BJ (cell line): ENCODE measurements at regions of chr12 and their contacts with region 1.

Region 1: DNA sequence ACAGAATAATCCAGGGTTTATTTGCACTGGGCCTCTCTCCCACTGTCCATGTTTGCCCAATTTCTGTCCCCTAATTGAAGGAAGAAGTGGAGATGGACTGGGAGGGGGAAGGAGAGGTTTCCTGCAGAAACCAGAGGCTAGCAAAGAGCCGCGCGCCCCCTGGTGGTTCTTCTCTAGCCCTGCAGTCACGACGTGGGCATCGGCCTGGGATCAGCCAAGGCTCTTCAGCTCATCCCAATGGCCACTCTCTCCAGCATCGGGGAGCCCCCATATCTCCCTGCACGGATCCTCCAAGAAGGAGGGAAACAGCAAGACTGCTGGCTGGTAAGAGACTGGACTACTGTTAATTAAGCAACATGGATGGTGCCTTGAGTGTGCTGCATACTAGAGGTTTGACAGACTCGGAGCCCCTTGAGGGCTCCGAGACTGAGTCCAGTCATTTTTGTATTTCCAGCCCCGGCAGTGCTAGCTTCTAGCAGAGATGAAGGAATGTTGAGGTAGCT is 18.7 kb downstream of the ZBTB39 start:
- DNase-seq: no peak
- H3K4me3 ChIP-seq: no peak overlapping the region
- H3K27me3 ChIP-seq: no peaks in the 10 kb centered on the region
- CTCF ChIP-seq: peak; percentile 97

Region 2: DNA sequence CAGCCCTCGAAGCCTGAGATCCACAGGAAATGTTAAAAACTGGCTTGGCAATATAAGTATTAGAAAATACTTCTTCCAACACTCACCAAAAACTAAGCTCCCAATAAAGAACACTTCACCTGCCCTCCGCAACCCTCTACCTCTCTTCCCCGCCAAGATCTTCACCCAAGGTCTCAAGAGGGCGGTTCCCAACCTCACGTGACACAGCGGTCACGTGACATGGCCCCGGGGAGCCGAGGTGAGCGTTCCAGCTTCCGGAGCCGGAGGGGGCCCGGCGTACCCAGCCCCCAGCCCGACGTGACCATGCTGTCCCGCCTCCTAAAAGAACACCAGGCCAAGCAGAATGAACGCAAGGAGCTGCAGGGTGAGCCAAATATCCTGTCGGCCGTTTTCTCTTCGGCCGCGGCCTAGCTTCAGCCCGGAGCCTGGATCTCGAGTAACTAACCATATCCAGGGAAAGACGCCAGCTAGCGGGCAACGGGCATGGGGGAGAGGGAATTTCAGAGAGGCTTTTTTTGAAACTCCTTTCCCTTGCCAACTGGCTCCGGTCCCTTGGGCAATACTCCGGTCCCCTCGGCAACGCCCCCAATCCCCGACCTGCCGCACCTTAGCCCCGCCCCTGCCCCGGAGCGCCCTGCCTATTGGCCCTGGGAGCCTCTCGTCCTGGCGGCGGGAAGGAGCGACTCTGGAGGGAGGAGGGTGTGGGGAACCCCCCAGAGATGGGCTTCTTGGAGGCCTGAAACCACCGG is 1271.6 kb before region 1 on chr12 and contains the start of gene BLOC1S1:
- CTCF ChIA-PET with region 1: no interaction called
- POLR2A ChIA-PET with region 1: no interaction called
- DNase-seq: no peak
- H3K4me3 ChIP-seq: peak within 1 kb of the TSS; percentile 74
- H3K27me3 ChIP-seq: no peaks in the 10 kb centered on the region
- CTCF ChIP-seq: peak; percentile 2; the same call in 1 of the 2 replicates
- polyA plus RNA-seq, gene BLOC1S1: 147 and 172 TPM in 2 replicates

Region 3: DNA sequence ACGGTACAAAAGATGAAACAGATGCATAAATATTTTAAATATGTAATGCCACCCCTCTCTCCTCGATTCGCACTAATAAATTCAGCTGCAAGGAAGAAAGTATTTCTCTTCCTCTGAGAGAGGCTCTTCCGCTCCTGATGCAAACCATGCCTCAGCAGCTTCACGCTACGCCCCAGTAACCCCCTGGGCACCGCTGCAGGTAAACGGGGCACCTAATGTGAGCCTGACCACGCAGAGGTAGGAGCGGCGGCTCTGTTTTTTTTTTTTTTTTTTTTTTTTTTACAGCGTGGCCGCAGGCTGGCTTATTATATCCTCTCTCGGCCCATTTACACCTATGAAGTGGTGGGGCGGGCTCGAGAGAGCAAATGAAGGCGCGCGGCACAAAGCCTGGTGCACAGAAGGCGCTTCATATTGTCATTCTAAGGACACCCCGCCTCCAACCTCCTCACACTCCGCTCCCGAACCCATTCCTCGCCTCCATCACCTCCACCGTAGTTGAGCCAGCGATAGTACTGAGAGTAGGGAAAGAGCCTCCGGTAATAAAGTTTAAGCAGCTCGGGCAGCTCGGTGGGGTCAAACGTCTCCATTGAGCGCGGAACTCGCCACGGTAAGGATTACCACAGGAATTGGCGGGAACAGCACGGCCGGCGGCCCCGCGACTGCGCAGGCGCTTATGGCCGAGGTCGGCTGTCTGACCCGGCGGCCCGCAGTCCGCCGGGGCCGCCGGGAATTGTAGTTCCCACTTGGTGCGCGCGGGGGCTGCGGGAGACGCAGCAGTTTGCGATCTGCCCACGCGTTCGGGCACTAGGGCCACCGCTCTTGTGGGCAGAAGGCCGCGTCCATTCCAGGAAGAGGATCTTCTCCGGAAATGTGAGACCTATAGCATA is 235.6 kb before region 1 on chr12 and contains the start of gene PRIM1:
- CTCF ChIA-PET with region 1: interaction called, 47 read pairs
- POLR2A ChIA-PET with region 1: no interaction called
- DNase-seq: no peak
- H3K4me3 ChIP-seq: peak within 1 kb of the TSS; percentile 91
- H3K27me3 ChIP-seq: no peaks in the 10 kb centered on the region
- CTCF ChIP-seq: peak; percentile 23
- polyA plus RNA-seq, gene PRIM1: 5.1 and 7.8 TPM in 2 replicates

Region 4: DNA sequence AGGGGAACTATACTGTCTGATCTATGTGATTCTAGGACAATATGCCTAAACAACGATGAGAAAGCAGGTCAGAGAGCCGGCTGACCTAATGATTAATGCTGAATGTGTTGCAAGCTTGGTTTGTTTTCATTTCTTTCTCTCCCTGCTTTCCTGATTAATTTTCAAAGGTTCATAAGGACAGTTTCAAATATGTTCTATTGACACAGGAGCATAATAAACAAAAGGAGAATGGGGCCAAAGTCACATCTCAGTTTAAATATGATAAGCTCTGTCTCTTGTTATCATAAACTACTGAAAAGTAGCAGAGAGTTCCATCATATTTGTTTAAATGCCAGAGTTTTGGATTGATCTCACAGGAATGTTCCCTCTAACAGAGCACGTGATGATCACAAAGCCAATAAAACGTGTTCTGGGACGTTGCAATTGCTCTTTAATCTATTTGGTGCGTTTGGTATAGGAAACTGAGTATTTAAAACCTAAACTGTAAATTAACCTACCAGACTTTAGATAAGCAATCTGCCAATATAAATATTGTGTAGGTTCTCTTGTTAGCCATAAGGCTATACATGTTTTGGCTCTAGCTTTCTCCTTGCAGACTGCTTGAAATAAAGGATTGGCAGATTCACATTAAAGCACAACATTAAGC is 228.2 kb before region 1 on chr12:
- CTCF ChIA-PET with region 1: interaction called, 62 read pairs
- POLR2A ChIA-PET with region 1: interaction called, 11 read pairs
- DNase-seq: no peak
- H3K4me3 ChIP-seq: no peak overlapping the region
- H3K27me3 ChIP-seq: no peaks in the 10 kb centered on the region
- CTCF ChIP-seq: no peak

Region 5: DNA sequence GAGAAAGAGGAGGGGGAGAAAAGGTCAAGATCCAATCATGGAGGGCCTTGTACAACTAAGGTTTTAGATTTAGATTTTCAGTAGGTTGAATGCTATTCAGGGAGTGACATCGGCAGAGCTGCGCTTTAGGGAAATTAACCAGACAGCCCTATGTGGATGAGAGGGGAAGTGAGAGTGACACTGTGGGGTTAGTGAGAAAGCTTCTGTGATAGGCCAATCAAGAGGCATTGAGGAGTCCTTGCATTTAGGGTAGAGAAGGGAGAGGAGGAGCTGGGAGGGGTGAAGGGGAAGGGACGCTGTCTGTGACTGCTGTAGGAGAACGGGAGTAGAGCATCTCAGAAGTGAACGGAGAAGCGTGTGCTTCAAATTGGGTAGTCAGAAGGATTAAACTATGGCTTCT is 221.1 kb before region 1 on chr12:
- CTCF ChIA-PET with region 1: interaction called, 62 read pairs
- POLR2A ChIA-PET with region 1: interaction called, 11 read pairs
- DNase-seq: no peak
- H3K4me3 ChIP-seq: no peak overlapping the region
- H3K27me3 ChIP-seq: no peaks in the 10 kb centered on the region
- CTCF ChIP-seq: no peak

Region 6: DNA sequence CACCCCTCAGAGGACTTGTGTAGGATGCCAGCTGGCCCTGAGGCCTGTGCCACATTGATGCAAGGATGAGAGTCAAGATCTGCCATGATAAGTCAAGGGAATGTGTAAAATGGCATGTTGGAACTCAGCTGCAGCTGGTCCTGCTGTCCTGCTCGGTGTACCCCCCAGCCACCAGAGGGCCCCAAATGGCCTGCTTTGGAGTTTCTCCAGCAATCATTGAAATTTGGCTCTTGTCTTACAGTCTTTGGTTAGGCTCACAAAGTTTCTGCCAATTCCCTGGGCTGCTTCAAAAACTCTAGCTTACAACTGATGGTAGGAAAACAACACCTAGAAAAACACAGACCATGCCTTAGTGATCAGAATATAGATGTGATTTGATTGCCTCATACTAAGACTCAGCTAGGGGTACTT is 147.7 kb before region 1 on chr12:
- CTCF ChIA-PET with region 1: interaction called, 11 read pairs
- POLR2A ChIA-PET with region 1: no interaction called
- DNase-seq: no peak
- H3K4me3 ChIP-seq: no peak overlapping the region
- H3K27me3 ChIP-seq: no peaks in the 10 kb centered on the region
- CTCF ChIP-seq: peak; percentile 33

Region 7: GRCh38 chr12:57377103-57377840 is 389.7 kb after region 1 on chr12:
- CTCF ChIA-PET with region 1: no interaction called
- POLR2A ChIA-PET with region 1: no interaction called
- DNase-seq: no peak
- H3K4me3 ChIP-seq: no peak overlapping the region
- H3K27me3 ChIP-seq: no peaks in the 10 kb centered on the region
- CTCF ChIP-seq: no peak